Heart right ventricle (tissue), 16 donors: ENCODE measurements at regions of chr20 and their contacts with region 1.

Region 1: GRCh38 chr20:60357163-60357562 is 398.9 kb downstream of the CDH26 start:
- DNase-seq: no peak
- ATAC-seq: no peak
- H3K4me3 ChIP-seq: no peak overlapping the region
- H3K27ac ChIP-seq: no peak overlapping the region
- H3K4me1 ChIP-seq: no peaks in the 10 kb centered on the region
- H3K27me3 ChIP-seq: peaks cover 0 to 5% (median 0%) of the 10 kb centered on the region in 7 donors
- CTCF ChIP-seq: no peak

Region 2: GRCh38 chr20:60292001-60292520 is 65.1 kb before region 1 on chr20:
- intact Hi-C with region 1: no loop called
- DNase-seq: no peak
- ATAC-seq: no peak
- H3K4me3 ChIP-seq: no peak overlapping the region
- H3K27ac ChIP-seq: no peak overlapping the region
- H3K4me1 ChIP-seq: no peaks in the 10 kb centered on the region
- H3K27me3 ChIP-seq: peaks cover 0 to 2% (median 0%) of the 10 kb centered on the region in 7 donors
- CTCF ChIP-seq: no peak

Region 3: GRCh38 chr20:60321601-60322000 is 35.6 kb before region 1 on chr20:
- intact Hi-C with region 1: loop called in 1 of 10 experiments (anchors 1 kb)
- DNase-seq: no peak
- ATAC-seq: no peak
- H3K4me3 ChIP-seq: no peak overlapping the region
- H3K27ac ChIP-seq: no peak overlapping the region
- H3K4me1 ChIP-seq: no peaks in the 10 kb centered on the region
- H3K27me3 ChIP-seq: peaks cover 0 to 14% (median 0%) of the 10 kb centered on the region in 7 donors
- CTCF ChIP-seq: no peak

Region 4: GRCh38 chr20:60559462-60559861 is 202.3 kb after region 1 on chr20:
- intact Hi-C with region 1: no loop called
- DNase-seq: no peak
- ATAC-seq: peak in 1 of 8 donors; percentile 37
- H3K4me3 ChIP-seq: no peak overlapping the region
- H3K27ac ChIP-seq: no peak overlapping the region
- H3K4me1 ChIP-seq: no peaks in the 10 kb centered on the region
- H3K27me3 ChIP-seq: peaks cover 0 to 39% (median 16%) of the 10 kb centered on the region in 7 donors
- CTCF ChIP-seq: no peak